Stomach (tissue), 19 donors: ENCODE measurements at regions of chr1 and their contacts with region 1.

Region 1: GRCh38 chr1:3863231-3863935 is 6.1 kb downstream of the DFFB start:
- DNase-seq: no peak
- H3K4me3 ChIP-seq: no peak overlapping the region
- H3K27ac ChIP-seq: no peak overlapping the region
- H3K4me1 ChIP-seq: peaks cover 5 to 24% (median 10%) of the 10 kb centered on the region in 4 donors
- H3K27me3 ChIP-seq: no peaks in the 10 kb centered on the region
- CTCF ChIP-seq: no peak
- EP300 ChIP-seq: no peak
- POLR2A ChIP-seq: no peak

Region 2: DNA sequence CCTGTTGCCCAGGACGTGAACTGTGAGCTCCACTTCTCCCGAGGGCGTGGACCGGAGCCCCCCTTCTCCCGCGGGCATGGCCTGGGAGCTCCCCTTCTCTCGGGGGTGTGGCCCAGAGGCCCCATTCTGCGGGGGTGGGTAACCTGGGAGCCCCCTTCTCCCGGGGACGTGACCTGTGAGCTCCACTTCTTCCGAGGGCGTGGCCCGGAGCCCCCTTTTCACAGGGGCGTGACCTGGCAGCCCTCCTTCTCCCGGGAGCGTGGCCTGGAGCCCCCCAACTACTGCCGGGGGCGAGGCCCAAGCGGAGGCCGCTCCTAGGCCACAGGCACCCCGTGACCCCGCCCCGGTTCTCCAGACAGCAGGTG is 36.4 kb after region 1 on chr1:
- intact Hi-C with region 1: loop called (anchors 5 kb)
- DNase-seq: no peak
- H3K4me3 ChIP-seq: peak overlapping the region; percentile 80 to 99 (median 94)
- H3K27ac ChIP-seq: peak overlapping the region; percentile 93 to 97 (median 96)
- H3K4me1 ChIP-seq: peaks cover 9 to 50% (median 26%) of the 10 kb centered on the region in 4 donors
- H3K27me3 ChIP-seq: no peaks in the 10 kb centered on the region
- CTCF ChIP-seq: no peak
- EP300 ChIP-seq: no peak
- POLR2A ChIP-seq: no peak